ENCODE measurements at regions of chr16 and their contacts with region 1.

Region 1: DNA sequence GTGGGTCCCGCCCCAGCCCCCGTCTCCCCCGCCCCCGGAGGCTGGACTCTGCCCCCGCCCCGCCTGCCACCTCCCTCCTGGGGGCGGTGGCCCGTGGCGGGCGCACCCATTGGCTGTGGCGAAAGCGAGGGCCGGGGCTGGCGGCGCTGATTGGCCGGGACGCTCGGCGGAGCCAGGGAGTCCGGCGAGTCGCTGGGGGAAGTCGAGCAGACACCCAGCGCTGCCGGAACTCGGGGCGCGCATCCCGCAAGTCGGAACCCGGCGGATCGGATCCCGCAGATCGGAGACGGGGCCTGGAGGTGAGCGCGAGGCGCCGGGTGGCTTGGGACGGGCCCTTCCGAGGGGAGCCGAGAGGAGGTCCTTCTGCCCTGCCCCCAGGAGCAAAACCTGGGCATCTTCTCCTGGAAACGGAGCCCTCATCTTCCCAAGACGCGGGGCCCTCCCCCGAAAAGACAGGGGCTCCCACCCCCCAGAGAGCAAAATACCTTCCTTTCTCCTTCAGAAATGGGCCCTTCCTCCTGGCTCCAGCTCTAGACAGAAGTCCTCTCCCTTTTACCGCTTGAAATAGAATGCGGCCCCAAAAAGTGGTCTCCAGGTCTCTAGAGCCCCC is at the start of gene ABAT:
- DNase-seq: peak in 1 of 2 experiments; percentile 91
- H3K4me3 ChIP-seq: peak within 1 kb of the TSS; percentile 49 to 86 (median 66)
- H3K27ac ChIP-seq: no peak within 1 kb of the TSS
- H3K4me1 ChIP-seq: peaks cover 0 to 7% (median 2%) of the 10 kb centered on the region in 4 experiments; a peak in 5 of 7 replicates
- H3K27me3 ChIP-seq: peaks cover 0 to 14% (median 9%) of the 10 kb centered on the region in 4 experiments; a peak in 6 of 7 replicates
- CTCF ChIP-seq: no peak
- EP300 ChIP-seq: no peak
- POLR2A ChIP-seq: peak in 1 of 2 experiments; percentile 57; a peak in 2 of 3 replicates
- RAD21 ChIP-seq: no peak
- total RNA-seq, gene ABAT: 8.4 and 8.9 TPM in 2 replicates

Region 2: GRCh38 chr16:8704098-8704497 is 29.6 kb after region 1 on chr16:
- CTCF ChIA-PET with region 1: no interaction called
- POLR2A ChIA-PET with region 1: no interaction called
- DNase-seq: no peak
- H3K4me3 ChIP-seq: no peak overlapping the region
- H3K27ac ChIP-seq: no peak overlapping the region
- H3K4me1 ChIP-seq: no peaks in the 10 kb centered on the region
- H3K27me3 ChIP-seq: no peaks in the 10 kb centered on the region
- CTCF ChIP-seq: no peak
- EP300 ChIP-seq: no peak
- POLR2A ChIP-seq: no peak
- RAD21 ChIP-seq: no peak

Region 3: GRCh38 chr16:8727131-8727806 is 52.8 kb after region 1 on chr16:
- CTCF ChIA-PET with region 1: no interaction called
- POLR2A ChIA-PET with region 1: no interaction called
- DNase-seq: no peak
- H3K4me3 ChIP-seq: no peak overlapping the region
- H3K27ac ChIP-seq: no peak overlapping the region
- H3K4me1 ChIP-seq: peaks cover 0 to 2% (median under 1%) of the 10 kb centered on the region in 4 experiments; a peak in 1 of 7 replicates
- H3K27me3 ChIP-seq: no peaks in the 10 kb centered on the region
- CTCF ChIP-seq: no peak
- EP300 ChIP-seq: no peak
- POLR2A ChIP-seq: no peak
- RAD21 ChIP-seq: no peak

Region 4: DNA sequence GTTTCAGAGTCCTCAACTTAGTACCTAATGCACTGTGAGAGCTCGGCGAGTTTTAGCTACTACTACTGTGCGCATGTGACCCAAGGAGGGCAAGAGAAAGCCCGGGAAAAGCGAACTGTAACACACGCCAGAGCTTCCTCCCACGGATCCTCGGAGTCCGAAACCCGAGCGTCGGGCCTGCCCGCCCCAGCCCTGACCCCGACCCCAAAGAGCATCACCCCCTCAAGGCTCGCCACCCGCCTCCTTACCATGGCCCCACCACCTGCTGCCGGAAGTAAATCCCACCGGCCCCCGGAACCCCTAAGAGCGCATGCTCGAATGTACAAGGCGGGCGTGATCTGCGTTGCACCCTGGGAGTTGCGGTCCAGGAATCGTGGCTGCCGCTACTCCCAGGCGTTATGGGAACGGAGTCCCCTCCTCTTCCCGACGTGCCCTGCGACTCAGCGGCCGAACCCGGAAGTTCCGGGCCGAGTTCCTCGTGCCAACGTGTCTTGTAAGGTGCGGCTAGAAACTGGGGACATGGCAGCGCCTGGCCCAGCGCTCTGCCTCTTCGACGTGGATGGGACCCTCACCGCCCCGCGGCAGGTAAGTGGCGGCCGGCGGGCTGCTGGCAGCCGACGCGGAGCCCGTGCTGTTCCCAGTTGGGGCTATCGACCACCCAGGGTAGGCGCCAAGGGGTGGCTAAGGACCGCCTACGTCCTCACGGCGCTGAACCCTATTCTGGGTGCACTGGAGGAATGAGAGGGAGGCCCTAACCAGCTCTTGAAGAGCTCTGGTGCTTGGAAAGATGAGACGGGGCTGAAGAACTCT is 123.1 kb after region 1 on chr16 and contains the starts of genes PMM2 and TMEM186:
- CTCF ChIA-PET with region 1: interaction called, 404 read pairs
- POLR2A ChIA-PET with region 1: no interaction called
- DNase-seq: peak; percentile 92 to 94
- H3K4me3 ChIP-seq: peak within 1 kb of the TSS; percentile 61 to 85 (median 77)
- H3K27ac ChIP-seq: peak within 1 kb of the TSS; percentile 64
- H3K4me1 ChIP-seq: peaks cover 0 to 13% (median 2%) of the 10 kb centered on the region in 4 experiments; a peak in 3 of 7 replicates
- H3K27me3 ChIP-seq: no peaks in the 10 kb centered on the region
- CTCF ChIP-seq: no peak
- EP300 ChIP-seq: no peak
- POLR2A ChIP-seq: peak in 1 of 2 experiments; percentile 76; a peak in 2 of 3 replicates
- RAD21 ChIP-seq: no peak
- total RNA-seq, gene PMM2: 47.0 and 49.4 TPM in 2 replicates
- total RNA-seq, gene TMEM186: 13.1 and 14.3 TPM in 2 replicates